Activated naive CD4-positive, alpha-beta T cell treated with anti-CD3 and anti-CD28 coated beads for 36 hours (primary cell): ENCODE measurements at regions of chr2 and their contacts with region 1.

Region 1: GRCh38 chr2:160224060-160224459 is 24.0 kb upstream of the ITGB6 start:
- DNase-seq: peak; percentile 58
- H3K4me3 Mint-ChIP-seq: no peak overlapping the region
- H3K27ac Mint-ChIP-seq: peak overlapping the region; percentile 50
- H3K4me1 Mint-ChIP-seq: peaks cover 52% of the 10 kb centered on the region
- H3K27me3 Mint-ChIP-seq: peaks cover 17% of the 10 kb centered on the region

Region 2: GRCh38 chr2:159904127-159904958 is 319.7 kb before region 1 on chr2:
- CTCF ChIA-PET with region 1: no interaction called
- intact Hi-C with region 1: loop called (anchors 2 kb)
- DNase-seq: peak; percentile 82
- H3K4me3 Mint-ChIP-seq: peak within 1 kb of the TSS; percentile 93
- H3K27ac Mint-ChIP-seq: peak within 1 kb of the TSS; percentile 93
- H3K4me1 Mint-ChIP-seq: peaks cover 58% of the 10 kb centered on the region
- H3K27me3 Mint-ChIP-seq: no peaks in the 10 kb centered on the region

Region 3: DNA sequence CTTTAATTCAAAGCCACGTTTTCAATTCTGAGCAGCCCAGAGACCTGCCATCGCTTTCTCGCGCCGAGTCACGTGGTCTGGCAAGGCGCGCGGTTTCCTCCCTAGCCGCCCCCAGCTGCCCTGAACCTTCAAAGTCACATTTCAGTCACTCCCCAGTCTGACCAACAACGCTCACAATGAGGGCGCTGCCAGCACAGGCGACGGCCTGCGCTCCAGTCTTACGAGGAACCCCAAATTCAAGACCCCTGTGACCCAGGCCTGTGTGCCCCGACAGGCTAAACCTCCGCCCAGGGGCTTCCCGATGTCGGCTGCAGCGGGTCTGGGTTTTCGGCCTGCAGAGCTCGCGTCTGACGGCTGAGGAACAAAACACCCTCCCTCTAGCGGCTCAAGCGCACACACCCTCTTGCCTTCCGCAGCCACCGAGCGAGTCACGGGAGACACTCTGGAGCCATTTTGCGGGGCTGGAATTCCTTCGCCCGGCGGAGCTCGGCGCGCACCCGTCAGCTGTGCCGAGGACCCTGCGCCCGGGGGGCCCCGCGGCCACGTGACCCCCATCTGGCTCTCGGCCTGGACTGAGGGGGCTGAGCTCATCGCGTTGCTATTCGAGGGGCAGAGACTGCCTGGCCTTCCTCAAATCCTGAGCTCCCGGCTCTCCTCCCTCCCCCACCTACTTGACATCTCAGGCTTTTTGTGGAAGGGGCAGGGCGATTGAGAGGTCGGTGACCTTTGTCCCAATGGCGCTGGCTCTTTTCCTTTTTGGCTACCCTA is 45.9 kb after region 1 on chr2:
- CTCF ChIA-PET with region 1: no interaction called
- intact Hi-C with region 1: loop called (anchors 1 kb)
- DNase-seq: peak; percentile 64
- H3K4me3 Mint-ChIP-seq: peak overlapping the region; percentile 65
- H3K27ac Mint-ChIP-seq: peak overlapping the region; percentile 53
- H3K4me1 Mint-ChIP-seq: peaks cover 39% of the 10 kb centered on the region
- H3K27me3 Mint-ChIP-seq: no peaks in the 10 kb centered on the region

Region 4: DNA sequence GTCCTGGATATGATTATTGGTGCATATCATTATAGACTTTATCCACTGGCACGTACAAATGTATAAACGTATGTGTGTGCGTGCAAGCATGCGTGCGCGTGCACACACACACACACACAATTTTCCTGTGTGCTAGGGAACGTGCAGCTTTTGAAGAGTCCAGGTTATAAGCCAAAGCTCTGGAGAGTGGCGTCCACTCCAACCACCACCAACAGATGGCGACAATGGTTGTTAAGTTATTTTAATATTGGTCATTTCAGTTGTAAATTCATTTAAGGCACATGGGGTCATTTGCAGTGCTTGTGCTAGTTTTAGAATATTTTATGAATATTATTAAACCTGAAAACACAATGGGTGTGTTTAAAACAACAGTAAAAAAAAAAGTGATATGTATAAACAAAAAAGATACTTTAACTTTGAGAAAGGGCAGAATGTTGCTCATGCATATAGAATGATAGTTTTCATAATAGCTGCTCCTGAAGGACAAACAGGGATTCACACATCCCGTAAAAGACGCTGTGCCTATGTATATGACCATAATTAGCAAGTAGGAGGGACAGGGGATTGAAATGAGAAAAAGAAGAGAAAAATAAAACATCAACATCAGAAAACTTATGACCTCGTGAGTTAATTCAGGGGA is 100.2 kb after region 1 on chr2:
- CTCF ChIA-PET with region 1: interaction called, 4 read pairs
- intact Hi-C with region 1: loop called (anchors 1 kb)
- DNase-seq: peak; percentile 69
- H3K4me3 Mint-ChIP-seq: no peak overlapping the region
- H3K27ac Mint-ChIP-seq: no peak overlapping the region
- H3K4me1 Mint-ChIP-seq: peaks cover 78% of the 10 kb centered on the region
- H3K27me3 Mint-ChIP-seq: no peaks in the 10 kb centered on the region

Region 5: GRCh38 chr2:160429248-160430000 is 205.4 kb after region 1 on chr2:
- CTCF ChIA-PET with region 1: no interaction called
- intact Hi-C with region 1: loop called (anchors 2 kb)
- DNase-seq: no peak
- H3K4me3 Mint-ChIP-seq: peak overlapping the region; percentile 47
- H3K27ac Mint-ChIP-seq: peak overlapping the region; percentile 88
- H3K4me1 Mint-ChIP-seq: peaks cover 49% of the 10 kb centered on the region
- H3K27me3 Mint-ChIP-seq: no peaks in the 10 kb centered on the region

Region 6: GRCh38 chr2:161122772-161123530 is 898.9 kb after region 1 on chr2:
- CTCF ChIA-PET with region 1: no interaction called
- intact Hi-C with region 1: loop called (anchors 1 kb)
- DNase-seq: peak; percentile 70
- H3K4me3 Mint-ChIP-seq: no peak overlapping the region
- H3K27ac Mint-ChIP-seq: peak overlapping the region; percentile 3
- H3K4me1 Mint-ChIP-seq: peaks cover 20% of the 10 kb centered on the region
- H3K27me3 Mint-ChIP-seq: peaks cover 3% of the 10 kb centered on the region